Natural killer cell (primary cell): ENCODE measurements at regions of chr7 and their contacts with region 1.

Region 1: GRCh38 chr7:101059627-101059942 is 25.7 kb upstream of the TRIM56 start:
- DNase-seq: no peak
- ATAC-seq: peak in 2 of 3 donors; percentile 8 to 17
- H3K4me3 ChIP-seq: no peak overlapping the region
- H3K4me3 Mint-ChIP-seq: no peak overlapping the region
- H3K27ac ChIP-seq: no peak overlapping the region
- H3K27ac Mint-ChIP-seq: no peak overlapping the region
- H3K4me1 ChIP-seq: no peaks in the 10 kb centered on the region
- H3K4me1 Mint-ChIP-seq: peaks cover 0 to 7% of the 10 kb centered on the region in 2 donors
- H3K27me3 ChIP-seq: peaks cover 3% of the 10 kb centered on the region
- H3K27me3 Mint-ChIP-seq: peaks cover 38 to 54% of the 10 kb centered on the region in 2 donors
- CTCF ChIP-seq: peak; percentile 18

Region 2: GRCh38 chr7:100896732-100897608 is 162.6 kb before region 1 on chr7:
- intact Hi-C with region 1: loop called (anchors 1 kb)
- DNase-seq: peak; percentile 56 to 77
- ATAC-seq: peak; percentile 32 to 57 (median 55)
- H3K4me3 ChIP-seq: no peak overlapping the region
- H3K4me3 Mint-ChIP-seq: peak overlapping the region; percentile 75
- H3K27ac ChIP-seq: no peak overlapping the region
- H3K27ac Mint-ChIP-seq: no peak overlapping the region
- H3K4me1 ChIP-seq: peaks cover 23% of the 10 kb centered on the region
- H3K4me1 Mint-ChIP-seq: peaks cover 6 to 8% of the 10 kb centered on the region in 2 donors
- H3K27me3 ChIP-seq: peaks cover 24% of the 10 kb centered on the region
- H3K27me3 Mint-ChIP-seq: peaks cover 36 to 50% of the 10 kb centered on the region in 2 donors
- CTCF ChIP-seq: peak; percentile 67

Region 3: GRCh38 chr7:100965723-100966541 is 93.7 kb before region 1 on chr7:
- intact Hi-C with region 1: loop called (anchors 1 kb)
- DNase-seq: peak; percentile 75 to 77
- ATAC-seq: peak; percentile 80 to 86 (median 86)
- H3K4me3 ChIP-seq: peak overlapping the region; percentile 13
- H3K4me3 Mint-ChIP-seq: peak overlapping the region; percentile 88
- H3K27ac ChIP-seq: no peak overlapping the region
- H3K27ac Mint-ChIP-seq: no peak overlapping the region
- H3K4me1 ChIP-seq: peaks cover 17% of the 10 kb centered on the region
- H3K4me1 Mint-ChIP-seq: peaks cover 8 to 27% of the 10 kb centered on the region in 2 donors
- H3K27me3 ChIP-seq: peaks cover 27% of the 10 kb centered on the region
- H3K27me3 Mint-ChIP-seq: peaks cover 40 to 50% of the 10 kb centered on the region in 2 donors
- CTCF ChIP-seq: peak; percentile 70

Region 4: GRCh38 chr7:101197991-101198390 is 138.4 kb after region 1 on chr7:
- intact Hi-C with region 1: no loop called
- DNase-seq: no peak
- ATAC-seq: no peak
- H3K4me3 ChIP-seq: no peak overlapping the region
- H3K4me3 Mint-ChIP-seq: no peak overlapping the region
- H3K27ac ChIP-seq: no peak overlapping the region
- H3K27ac Mint-ChIP-seq: no peak overlapping the region
- H3K4me1 ChIP-seq: peaks cover 11% of the 10 kb centered on the region
- H3K4me1 Mint-ChIP-seq: peaks cover 0 to 9% of the 10 kb centered on the region in 2 donors
- H3K27me3 ChIP-seq: peaks cover 15% of the 10 kb centered on the region
- H3K27me3 Mint-ChIP-seq: peaks cover 6 to 26% of the 10 kb centered on the region in 2 donors
- CTCF ChIP-seq: no peak

Region 5: DNA sequence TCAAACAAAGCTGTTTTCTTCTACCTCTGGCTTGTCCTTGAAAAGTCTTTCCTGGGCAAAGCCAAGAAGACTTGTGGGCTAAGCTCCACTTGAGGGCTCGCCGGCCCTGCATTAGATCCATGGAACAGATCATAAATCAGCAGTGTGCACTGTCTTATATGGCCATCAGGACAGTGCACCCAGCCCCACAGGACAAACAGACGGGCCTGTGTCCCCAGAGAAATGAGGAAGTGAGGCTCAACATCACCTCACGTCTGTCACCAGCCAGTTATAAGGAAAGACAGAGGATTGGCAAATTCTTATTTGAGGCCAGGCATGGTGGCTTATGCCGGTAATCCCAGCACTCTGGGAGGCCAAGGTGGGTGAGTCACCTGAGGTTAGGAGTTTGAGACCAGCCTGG is 274.3 kb after region 1 on chr7:
- intact Hi-C with region 1: no loop called
- DNase-seq: no peak
- ATAC-seq: no peak
- H3K4me3 ChIP-seq: no peak overlapping the region
- H3K4me3 Mint-ChIP-seq: no peak overlapping the region
- H3K27ac ChIP-seq: no peak overlapping the region
- H3K27ac Mint-ChIP-seq: no peak overlapping the region
- H3K4me1 ChIP-seq: no peaks in the 10 kb centered on the region
- H3K4me1 Mint-ChIP-seq: no peaks in the 10 kb centered on the region
- H3K27me3 ChIP-seq: no peaks in the 10 kb centered on the region
- H3K27me3 Mint-ChIP-seq: no peaks in the 10 kb centered on the region
- CTCF ChIP-seq: no peak